B cell (primary cell): ENCODE measurements at regions of chr17 and their contacts with region 1.

Region 1: DNA sequence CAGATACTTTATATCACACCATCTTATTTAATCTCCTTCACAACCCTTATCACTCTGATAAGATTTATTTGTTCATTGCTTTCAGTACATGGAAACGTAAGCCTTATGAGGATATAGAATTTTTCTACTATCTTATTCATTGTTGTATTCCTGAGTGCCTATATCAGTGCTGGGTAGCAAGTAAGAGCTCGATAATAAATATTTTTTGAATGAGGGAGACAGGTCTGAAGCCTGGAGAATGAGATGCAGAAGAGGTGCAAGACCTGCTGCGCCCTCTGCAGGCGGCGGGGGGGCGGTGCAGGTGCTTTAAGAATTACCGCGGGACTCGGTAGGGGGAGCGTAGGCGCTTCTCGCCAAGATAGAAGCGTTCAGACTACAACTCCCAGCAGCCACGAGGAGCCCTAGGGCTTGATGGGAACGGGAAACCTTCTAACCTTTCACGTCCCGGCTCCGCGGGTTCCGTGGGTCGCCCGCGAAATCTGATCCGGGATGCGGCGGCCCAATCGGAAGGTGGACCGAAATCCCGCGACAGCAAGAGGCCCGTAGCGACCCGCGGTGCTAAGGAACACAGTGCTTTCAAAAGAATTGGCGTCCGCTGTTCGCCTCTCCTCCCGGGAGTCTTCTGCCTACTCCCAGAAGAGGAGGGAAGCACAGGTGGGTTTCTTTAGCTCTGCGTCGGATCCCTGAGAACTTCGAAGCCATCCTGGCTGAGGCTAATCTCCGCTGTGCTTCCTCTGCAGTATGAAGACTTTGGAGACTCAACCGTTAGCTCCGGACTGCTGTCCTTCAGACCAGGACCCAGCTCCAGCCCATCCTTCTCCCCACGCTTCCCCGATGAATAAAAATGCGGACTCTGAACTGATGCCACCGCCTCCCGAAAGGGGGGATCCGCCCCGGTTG is at the start of gene WRAP53:
- DNase-seq: peak; percentile 96
- ATAC-seq: peak; percentile 76
- H3K4me3 ChIP-seq: peak within 1 kb of the TSS; percentile 68 to 100 (median 100)
- H3K4me3 Mint-ChIP-seq: peak within 1 kb of the TSS; percentile 98
- H3K27ac ChIP-seq: peak within 1 kb of the TSS; percentile 94 to 99
- H3K27ac Mint-ChIP-seq: peak within 1 kb of the TSS; percentile 100
- H3K4me1 ChIP-seq: peaks cover 22 to 32% of the 10 kb centered on the region in 2 donors
- H3K4me1 Mint-ChIP-seq: peaks cover 34% of the 10 kb centered on the region
- H3K27me3 ChIP-seq: no peaks in the 10 kb centered on the region
- H3K27me3 Mint-ChIP-seq: no peaks in the 10 kb centered on the region
- CTCF ChIP-seq: peak; percentile 100
- total RNA-seq, gene WRAP53: 17.2 and 18.2 TPM in 2 replicates

Region 2: GRCh38 chr17:6555331-6556120 is 1132.6 kb before region 1 on chr17:
- CTCF ChIA-PET with region 1: no interaction called
- POLR2A ChIA-PET with region 1: no interaction called
- intact Hi-C with region 1: no loop called
- DNase-seq: peak; percentile 50
- ATAC-seq: peak; percentile 50
- H3K4me3 ChIP-seq: peak overlapping the region in 4 of 5 experiments; percentile 5 to 58 (median 44)
- H3K4me3 Mint-ChIP-seq: peak overlapping the region; percentile 90
- H3K27ac ChIP-seq: no peak overlapping the region
- H3K27ac Mint-ChIP-seq: no peak overlapping the region
- H3K4me1 ChIP-seq: peaks cover 16 to 20% of the 10 kb centered on the region in 2 donors
- H3K4me1 Mint-ChIP-seq: peaks cover 19% of the 10 kb centered on the region
- H3K27me3 ChIP-seq: peaks cover 0 to 42% (median 21%) of the 10 kb centered on the region in 4 experiments
- H3K27me3 Mint-ChIP-seq: peaks cover 54% of the 10 kb centered on the region
- CTCF ChIP-seq: no peak

Region 3: GRCh38 chr17:7214300-7215135 is 473.6 kb before region 1 on chr17:
- CTCF ChIA-PET with region 1: no interaction called
- POLR2A ChIA-PET with region 1: no interaction called
- intact Hi-C with region 1: loop called (anchors 2 kb)
- DNase-seq: peak; percentile 99
- ATAC-seq: peak; percentile 85
- H3K4me3 ChIP-seq: peak overlapping the region; percentile 39 to 66 (median 53)
- H3K4me3 Mint-ChIP-seq: peak overlapping the region; percentile 97
- H3K27ac ChIP-seq: peak overlapping the region; percentile 77 to 90
- H3K27ac Mint-ChIP-seq: peak overlapping the region; percentile 99
- H3K4me1 ChIP-seq: peaks cover 25 to 50% of the 10 kb centered on the region in 2 donors
- H3K4me1 Mint-ChIP-seq: peaks cover 49% of the 10 kb centered on the region
- H3K27me3 ChIP-seq: peaks cover 0 to 4% (median 0%) of the 10 kb centered on the region in 4 experiments
- H3K27me3 Mint-ChIP-seq: peaks cover 5% of the 10 kb centered on the region
- CTCF ChIP-seq: peak; percentile 44

Region 4: DNA sequence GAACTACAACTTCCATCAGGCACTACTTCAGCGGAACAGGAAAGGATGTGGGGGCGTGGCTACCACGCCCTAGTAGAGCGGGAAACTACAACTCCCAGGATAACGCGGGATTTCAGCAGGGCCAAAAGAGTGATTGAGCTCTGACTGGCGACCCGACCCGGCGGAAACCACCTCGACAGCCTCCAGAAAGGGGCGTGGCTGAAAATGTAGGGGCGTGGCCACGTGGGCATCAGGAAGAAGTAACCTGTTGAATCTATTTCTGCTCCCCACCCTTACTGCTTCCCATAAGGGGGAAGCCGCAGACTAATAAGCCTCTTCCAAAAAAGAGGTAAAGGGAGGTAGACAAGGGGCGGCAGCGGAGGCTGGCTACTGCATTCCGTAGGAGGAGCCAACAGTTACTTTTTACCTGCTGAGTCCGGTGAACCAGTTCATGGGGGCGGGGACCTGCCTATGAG is 252.9 kb before region 1 on chr17 and contains the start of gene TMEM102:
- CTCF ChIA-PET with region 1: interaction called, 22 read pairs
- POLR2A ChIA-PET with region 1: interaction called, 10 read pairs
- intact Hi-C with region 1: no loop called
- DNase-seq: peak; percentile 99
- ATAC-seq: peak; percentile 87
- H3K4me3 ChIP-seq: peak within 1 kb of the TSS; percentile 77 to 93 (median 79)
- H3K4me3 Mint-ChIP-seq: peak within 1 kb of the TSS; percentile 96
- H3K27ac ChIP-seq: peak within 1 kb of the TSS; percentile 80 to 82
- H3K27ac Mint-ChIP-seq: peak within 1 kb of the TSS; percentile 94
- H3K4me1 ChIP-seq: peaks cover 41 to 45% of the 10 kb centered on the region in 2 donors
- H3K4me1 Mint-ChIP-seq: peaks cover 43% of the 10 kb centered on the region
- H3K27me3 ChIP-seq: peaks cover 0 to 24% (median 17%) of the 10 kb centered on the region in 4 experiments
- H3K27me3 Mint-ChIP-seq: peaks cover 17% of the 10 kb centered on the region
- CTCF ChIP-seq: no peak
- total RNA-seq, gene TMEM102: 17.7 and 19.1 TPM in 2 replicates

Region 5: GRCh38 chr17:7572588-7573323 is 115.4 kb before region 1 on chr17:
- CTCF ChIA-PET with region 1: interaction called, 3 read pairs
- POLR2A ChIA-PET with region 1: interaction called, 4 read pairs
- intact Hi-C with region 1: loop called (anchors 1 kb)
- DNase-seq: peak; percentile 100
- ATAC-seq: peak; percentile 83
- H3K4me3 ChIP-seq: peak overlapping the region; percentile 72 to 98 (median 93)
- H3K4me3 Mint-ChIP-seq: peak overlapping the region; percentile 94
- H3K27ac ChIP-seq: peak overlapping the region; percentile 85 to 94
- H3K27ac Mint-ChIP-seq: peak overlapping the region; percentile 99
- H3K4me1 ChIP-seq: peaks cover 22 to 29% of the 10 kb centered on the region in 2 donors
- H3K4me1 Mint-ChIP-seq: peaks cover 52% of the 10 kb centered on the region
- H3K27me3 ChIP-seq: no peaks in the 10 kb centered on the region
- H3K27me3 Mint-ChIP-seq: no peaks in the 10 kb centered on the region
- CTCF ChIP-seq: no peak

Region 6: GRCh38 chr17:7632492-7632894 is 55.7 kb before region 1 on chr17:
- CTCF ChIA-PET with region 1: interaction called, 35 read pairs
- POLR2A ChIA-PET with region 1: interaction called, 11 read pairs
- intact Hi-C with region 1: loop called (anchors 1 kb)
- DNase-seq: peak; percentile 61
- ATAC-seq: peak; percentile 12
- H3K4me3 ChIP-seq: no peak overlapping the region
- H3K4me3 Mint-ChIP-seq: no peak overlapping the region
- H3K27ac ChIP-seq: no peak overlapping the region
- H3K27ac Mint-ChIP-seq: no peak overlapping the region
- H3K4me1 ChIP-seq: peaks cover 0 to 5% of the 10 kb centered on the region in 2 donors
- H3K4me1 Mint-ChIP-seq: peaks cover 4% of the 10 kb centered on the region
- H3K27me3 ChIP-seq: no peaks in the 10 kb centered on the region
- H3K27me3 Mint-ChIP-seq: no peaks in the 10 kb centered on the region
- CTCF ChIP-seq: peak; percentile 18

Region 7: GRCh38 chr17:7715936-7716886 is 28.1 kb after region 1 on chr17:
- CTCF ChIA-PET with region 1: no interaction called
- POLR2A ChIA-PET with region 1: no interaction called
- intact Hi-C with region 1: no loop called
- DNase-seq: no peak
- ATAC-seq: no peak
- H3K4me3 ChIP-seq: no peak overlapping the region
- H3K4me3 Mint-ChIP-seq: peak overlapping the region; percentile 50
- H3K27ac ChIP-seq: no peak overlapping the region
- H3K27ac Mint-ChIP-seq: no peak overlapping the region
- H3K4me1 ChIP-seq: peaks cover 20 to 26% of the 10 kb centered on the region in 2 donors
- H3K4me1 Mint-ChIP-seq: peaks cover 25% of the 10 kb centered on the region
- H3K27me3 ChIP-seq: peaks cover 0 to 82% (median 40%) of the 10 kb centered on the region in 4 experiments
- H3K27me3 Mint-ChIP-seq: peaks cover 71% of the 10 kb centered on the region
- CTCF ChIP-seq: no peak

Region 8: GRCh38 chr17:7844292-7845154 is 156.4 kb after region 1 on chr17:
- CTCF ChIA-PET with region 1: no interaction called
- POLR2A ChIA-PET with region 1: interaction called, 7 read pairs
- intact Hi-C with region 1: loop called (anchors 5 kb)
- DNase-seq: peak; percentile 93
- ATAC-seq: peak; percentile 41
- H3K4me3 ChIP-seq: peak overlapping the region; percentile 67 to 95 (median 93)
- H3K4me3 Mint-ChIP-seq: peak overlapping the region; percentile 100
- H3K27ac ChIP-seq: peak overlapping the region; percentile 100
- H3K27ac Mint-ChIP-seq: peak overlapping the region; percentile 100
- H3K4me1 ChIP-seq: peaks cover 20 to 49% of the 10 kb centered on the region in 2 donors
- H3K4me1 Mint-ChIP-seq: peaks cover 39% of the 10 kb centered on the region
- H3K27me3 ChIP-seq: no peaks in the 10 kb centered on the region
- H3K27me3 Mint-ChIP-seq: no peaks in the 10 kb centered on the region
- CTCF ChIP-seq: no peak

Region 9: GRCh38 chr17:8383143-8383822 is 695.1 kb after region 1 on chr17 and contains the start of gene RPL26:
- CTCF ChIA-PET with region 1: no interaction called
- POLR2A ChIA-PET with region 1: no interaction called
- intact Hi-C with region 1: loop called (anchors 2 kb)
- DNase-seq: peak; percentile 98
- ATAC-seq: peak; percentile 89
- H3K4me3 ChIP-seq: peak within 1 kb of the TSS; percentile 73 to 95 (median 84)
- H3K4me3 Mint-ChIP-seq: peak within 1 kb of the TSS; percentile 89
- H3K27ac ChIP-seq: peak within 1 kb of the TSS; percentile 72 to 82
- H3K27ac Mint-ChIP-seq: peak within 1 kb of the TSS; percentile 87
- H3K4me1 ChIP-seq: peaks cover 25 to 36% of the 10 kb centered on the region in 2 donors
- H3K4me1 Mint-ChIP-seq: peaks cover 50% of the 10 kb centered on the region
- H3K27me3 ChIP-seq: no peaks in the 10 kb centered on the region
- H3K27me3 Mint-ChIP-seq: no peaks in the 10 kb centered on the region
- CTCF ChIP-seq: peak; percentile 100
- total RNA-seq, gene RPL26: 2,601 and 2,684 TPM in 2 replicates